Right ventricle myocardium inferior (tissue), 1 donor: ENCODE measurements at regions of chr10 and their contacts with region 1.

Region 1: DNA sequence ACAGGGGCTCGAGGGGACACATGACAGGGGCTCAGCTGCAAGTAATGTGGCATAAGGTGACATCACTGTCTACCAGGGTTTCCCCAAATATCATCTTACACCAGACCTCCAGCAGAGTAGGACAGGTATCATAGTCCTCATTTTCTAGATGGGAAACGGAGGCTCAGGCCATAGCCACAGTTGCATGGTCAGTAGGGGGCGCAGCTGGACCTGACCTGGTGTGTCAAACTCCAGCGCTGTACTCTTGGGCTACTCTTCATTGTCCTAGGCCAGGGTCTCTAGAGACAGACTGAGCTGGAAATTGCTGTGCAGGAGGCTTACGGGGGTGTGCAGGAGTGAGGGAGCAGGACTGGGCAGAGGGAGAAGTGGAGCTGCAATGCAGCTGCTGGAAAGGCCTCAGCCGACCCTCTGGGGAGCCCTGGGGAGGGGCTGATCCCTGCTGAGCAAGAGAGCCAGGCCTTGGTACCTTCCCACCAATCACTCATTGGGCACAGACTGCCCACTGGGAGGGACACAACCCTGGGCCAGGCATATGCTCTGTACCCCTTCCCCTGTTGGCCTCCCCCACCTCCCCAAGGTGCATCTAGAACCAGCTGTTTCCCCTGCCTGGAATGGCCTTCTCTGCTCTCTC is 89.9 kb downstream of the CDH23 start:
- DNase-seq: no peak
- ATAC-seq: no peak

Region 2: GRCh38 chr10:71396084-71396720 is 90.4 kb before region 1 on chr10:
- intact Hi-C with region 1: loop called (anchors 1 kb)
- DNase-seq: peak; percentile 76
- ATAC-seq: peak; percentile 92